Activated B cell treated with CpG ODN at 0.5 μM for 24 hours (primary cell): ENCODE measurements at regions of chr4 and their contacts with region 1.

Region 1: GRCh38 chr4:71184195-71184781 is 154.5 kb upstream of the SLC4A4 start:
- DNase-seq: no peak
- ATAC-seq: peak; percentile 55
- H3K4me3 Mint-ChIP-seq: peak overlapping the region; percentile 33
- H3K27ac Mint-ChIP-seq: no peak overlapping the region
- H3K4me1 Mint-ChIP-seq: peaks cover 24% of the 10 kb centered on the region
- H3K27me3 Mint-ChIP-seq: peaks cover 30% of the 10 kb centered on the region
- CTCF ChIP-seq: no peak

Region 2: DNA sequence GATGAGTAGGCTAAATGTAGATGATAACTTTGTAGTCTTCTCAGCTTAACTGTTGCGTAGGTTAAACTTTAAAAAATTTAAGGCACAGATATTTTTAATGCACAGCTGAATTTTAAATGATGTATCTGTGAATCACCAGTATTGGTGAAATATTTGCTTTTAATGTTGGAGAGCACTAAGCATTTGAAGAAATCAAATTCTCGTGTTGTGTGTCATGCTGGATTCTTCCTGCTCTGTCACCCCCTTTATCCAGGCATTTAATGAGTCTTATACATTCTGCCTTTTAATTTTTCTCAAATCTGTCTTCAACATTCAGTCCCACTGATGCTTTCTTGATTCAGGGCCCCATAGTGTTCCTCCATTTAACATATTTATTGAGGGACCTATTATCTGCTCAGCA is 231.2 kb after region 1 on chr4:
- CTCF ChIA-PET with region 1: no interaction called
- POLR2A ChIA-PET with region 1: no interaction called
- intact Hi-C with region 1: no loop called
- DNase-seq: no peak
- ATAC-seq: no peak
- H3K4me3 Mint-ChIP-seq: no peak overlapping the region
- H3K27ac Mint-ChIP-seq: no peak overlapping the region
- H3K4me1 Mint-ChIP-seq: no peaks in the 10 kb centered on the region
- H3K27me3 Mint-ChIP-seq: peaks cover 3% of the 10 kb centered on the region
- CTCF ChIP-seq: no peak

Region 3: DNA sequence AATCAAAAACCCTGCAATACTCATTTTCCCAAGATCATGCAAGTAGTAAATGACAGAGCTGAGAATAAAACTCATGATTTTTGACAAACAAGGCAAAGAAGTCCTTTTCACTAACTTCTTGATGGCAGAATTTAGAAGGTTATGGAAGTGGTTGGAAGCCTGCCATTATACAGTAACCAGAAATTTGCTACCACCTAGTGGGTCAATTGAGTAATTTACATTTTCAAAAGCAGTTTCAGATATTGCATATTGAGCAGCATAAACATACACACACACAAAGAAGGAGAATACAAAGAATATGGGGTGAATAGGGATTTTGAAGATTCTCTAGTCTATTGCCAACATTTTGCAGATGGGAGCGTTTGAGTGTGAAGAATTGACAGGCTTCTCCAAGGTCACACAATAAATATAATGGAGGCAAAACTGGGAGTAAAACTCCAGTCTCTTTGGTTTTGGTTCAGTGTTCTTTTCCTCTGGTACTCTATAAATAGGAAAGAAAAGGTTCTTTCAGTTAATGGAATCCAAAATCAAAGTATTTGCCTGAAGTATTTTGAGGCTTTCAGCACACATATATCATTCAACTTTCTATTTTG is 529.4 kb after region 1 on chr4:
- CTCF ChIA-PET with region 1: interaction called, 3 read pairs
- POLR2A ChIA-PET with region 1: no interaction called
- intact Hi-C with region 1: loop called (anchors 2 kb)
- DNase-seq: no peak
- ATAC-seq: no peak
- H3K4me3 Mint-ChIP-seq: no peak overlapping the region
- H3K27ac Mint-ChIP-seq: no peak overlapping the region
- H3K4me1 Mint-ChIP-seq: no peaks in the 10 kb centered on the region
- H3K27me3 Mint-ChIP-seq: no peaks in the 10 kb centered on the region
- CTCF ChIP-seq: no peak

Region 4: DNA sequence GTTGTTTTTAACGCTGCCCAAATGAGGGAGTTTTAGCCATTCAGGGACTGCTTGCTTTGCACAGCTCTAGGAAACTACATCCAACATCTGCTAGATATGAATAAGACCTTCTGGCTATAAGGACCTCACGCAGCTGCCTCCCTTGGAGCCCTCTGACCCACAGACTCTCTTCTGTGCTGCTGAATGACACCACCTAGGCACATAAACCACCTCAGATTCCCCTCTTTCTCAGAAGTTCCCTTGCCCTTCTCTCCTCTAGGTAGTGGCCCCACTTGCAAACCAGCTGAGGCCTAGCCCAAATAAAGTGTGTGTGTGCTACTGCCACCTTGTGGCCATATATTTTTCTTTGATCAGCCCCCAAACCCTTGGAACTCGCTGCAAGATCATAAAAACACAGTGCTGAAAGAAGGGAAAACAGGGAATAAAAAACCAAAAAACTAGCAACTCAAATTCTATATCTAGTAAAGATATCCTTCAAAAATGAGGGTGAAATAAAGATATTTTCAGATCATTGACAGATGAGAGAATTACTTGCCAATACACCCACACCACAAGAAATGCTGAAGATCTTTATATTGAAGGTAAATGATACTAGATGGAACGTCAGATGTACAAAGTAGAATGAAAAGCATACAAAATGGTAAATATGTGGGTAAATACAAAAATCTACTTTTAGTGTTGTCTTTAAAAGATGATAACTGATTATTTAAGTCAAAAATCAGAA is 1118.9 kb after region 1 on chr4:
- CTCF ChIA-PET with region 1: no interaction called
- POLR2A ChIA-PET with region 1: no interaction called
- intact Hi-C with region 1: loop called (anchors 1 kb)
- DNase-seq: peak; percentile 15
- ATAC-seq: peak; percentile 50
- H3K4me3 Mint-ChIP-seq: no peak overlapping the region
- H3K27ac Mint-ChIP-seq: no peak overlapping the region
- H3K4me1 Mint-ChIP-seq: no peaks in the 10 kb centered on the region
- H3K27me3 Mint-ChIP-seq: no peaks in the 10 kb centered on the region
- CTCF ChIP-seq: no peak